Common myeloid progenitor, CD34-positive (primary cell): ENCODE measurements at regions of chr14 and their contacts with region 1.

Region 1: GRCh38 chr14:23910101-23910875 is 43.3 kb upstream of the DHRS4 start:
- DNase-seq: peak; percentile 20 to 46 (median 29)
- H3K4me3 ChIP-seq: no peak overlapping the region
- H3K27ac ChIP-seq: no peak overlapping the region
- H3K4me1 ChIP-seq: no peaks in the 10 kb centered on the region
- H3K27me3 ChIP-seq: no peaks in the 10 kb centered on the region

Region 2: GRCh38 chr14:23588884-23589598 is 321.2 kb before region 1 on chr14:
- CTCF ChIA-PET with region 1: interaction called, 28 read pairs
- POLR2A ChIA-PET with region 1: no interaction called
- DNase-seq: peak; percentile 90 to 95 (median 92)
- H3K4me3 ChIP-seq: peak overlapping the region in 2 of 7 experiments; percentile 28 to 30
- H3K27ac ChIP-seq: no peak overlapping the region
- H3K4me1 ChIP-seq: peaks cover 0 to 9% (median 6%) of the 10 kb centered on the region in 4 experiments
- H3K27me3 ChIP-seq: no peaks in the 10 kb centered on the region

Region 3: GRCh38 chr14:23665375-23666192 is 244.7 kb before region 1 on chr14:
- CTCF ChIA-PET with region 1: interaction called, 56 read pairs
- POLR2A ChIA-PET with region 1: no interaction called
- DNase-seq: peak; percentile 47 to 70 (median 54)
- H3K4me3 ChIP-seq: no peak overlapping the region
- H3K27ac ChIP-seq: no peak overlapping the region
- H3K4me1 ChIP-seq: no peaks in the 10 kb centered on the region
- H3K27me3 ChIP-seq: peaks cover 0 to 4% (median 0%) of the 10 kb centered on the region in 5 experiments

Region 4: DNA sequence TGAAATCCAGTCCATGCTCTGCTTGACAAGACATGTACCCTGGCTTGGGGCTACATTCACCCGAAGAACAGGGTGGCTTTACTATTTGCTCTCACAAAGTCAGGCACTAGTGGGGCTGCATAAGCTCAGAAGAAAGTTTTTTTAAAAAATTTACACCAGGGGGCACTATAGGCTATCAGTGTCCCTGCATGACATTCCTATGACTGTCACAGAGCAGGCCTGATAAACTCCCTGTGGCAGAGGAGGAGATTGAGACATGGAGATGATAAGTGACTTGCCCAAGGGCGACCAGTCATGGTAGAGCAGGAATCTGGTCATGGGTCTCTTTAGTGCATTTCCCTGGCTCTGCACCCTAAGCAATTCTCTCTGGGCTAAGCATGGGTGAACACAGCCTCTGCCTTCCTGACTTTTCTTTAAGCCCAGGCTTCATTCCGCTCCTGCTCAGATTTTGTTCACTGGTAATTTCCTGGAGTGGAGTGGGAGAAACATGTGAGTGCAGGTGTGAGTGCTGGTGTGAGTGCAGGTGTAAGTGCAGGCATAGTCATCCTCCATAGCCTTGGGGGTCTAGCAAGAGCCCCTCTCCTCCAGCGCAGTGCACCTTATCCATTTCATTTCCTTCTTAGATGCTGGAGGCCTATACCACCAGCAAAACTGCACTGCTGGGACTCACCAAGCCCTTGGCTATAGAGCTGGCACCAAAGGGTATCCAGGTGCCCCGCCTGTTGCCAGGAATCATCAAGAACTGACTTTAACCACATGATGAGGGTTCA is 182.5 kb before region 1 on chr14:
- CTCF ChIA-PET with region 1: interaction called, 24 read pairs
- POLR2A ChIA-PET with region 1: no interaction called
- DNase-seq: peak; percentile 40 to 54 (median 43)
- H3K4me3 ChIP-seq: no peak overlapping the region
- H3K27ac ChIP-seq: no peak overlapping the region
- H3K4me1 ChIP-seq: peaks cover 0 to 3% (median 0%) of the 10 kb centered on the region in 4 experiments
- H3K27me3 ChIP-seq: no peaks in the 10 kb centered on the region

Region 5: DNA sequence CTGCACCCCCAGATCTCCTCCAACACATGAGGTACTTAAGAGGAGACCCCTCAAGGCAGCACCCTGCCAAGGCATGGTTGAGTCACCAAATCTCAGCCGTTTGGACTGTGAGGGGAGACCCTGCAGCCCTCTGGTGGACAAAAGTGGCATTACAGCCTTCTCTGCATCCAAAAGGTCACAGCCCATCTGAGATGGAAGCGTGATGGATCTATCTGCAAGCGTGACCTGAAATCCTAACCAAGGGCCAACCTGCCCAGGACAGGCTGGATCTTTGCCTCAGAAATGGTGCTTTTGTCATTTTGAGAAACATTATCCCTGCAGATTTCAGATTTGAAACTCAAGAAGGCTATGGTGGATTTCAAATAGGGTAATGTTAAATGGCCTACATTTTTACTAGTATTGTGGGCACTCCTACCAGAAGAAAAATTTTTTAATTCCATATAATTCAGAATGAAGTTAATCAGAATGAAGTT is 19.6 kb after region 1 on chr14:
- CTCF ChIA-PET with region 1: interaction called, 34 read pairs
- POLR2A ChIA-PET with region 1: no interaction called
- DNase-seq: peak; percentile 78 to 88 (median 84)
- H3K4me3 ChIP-seq: no peak overlapping the region
- H3K27ac ChIP-seq: no peak overlapping the region
- H3K4me1 ChIP-seq: peaks cover 0 to 7% (median 0%) of the 10 kb centered on the region in 4 experiments
- H3K27me3 ChIP-seq: no peaks in the 10 kb centered on the region

Region 6: GRCh38 chr14:24113801-24114535 is 203.7 kb after region 1 on chr14:
- CTCF ChIA-PET with region 1: no interaction called
- POLR2A ChIA-PET with region 1: no interaction called
- DNase-seq: peak; percentile 91 to 96 (median 93)
- H3K4me3 ChIP-seq: peak overlapping the region; percentile 51 to 98 (median 91)
- H3K27ac ChIP-seq: peak overlapping the region; percentile 95 to 98
- H3K4me1 ChIP-seq: peaks cover 10 to 35% (median 20%) of the 10 kb centered on the region in 4 experiments
- H3K27me3 ChIP-seq: no peaks in the 10 kb centered on the region